ENCODE measurements at regions of chr7 and their contacts with region 1.

Region 1: GRCh38 chr7:106153891-106154449 is 41.9 kb upstream of the SYPL1 start:
- DNase-seq: peak; percentile 86
- H3K4me3 Mint-ChIP-seq: no peak overlapping the region
- H3K27ac Mint-ChIP-seq: no peak overlapping the region
- H3K4me1 Mint-ChIP-seq: no peaks in the 10 kb centered on the region
- H3K27me3 Mint-ChIP-seq: peaks cover 18% of the 10 kb centered on the region
- CTCF ChIP-seq: peak; percentile 92

Region 2: GRCh38 chr7:105759670-105760550 is 394.1 kb before region 1 on chr7:
- CTCF ChIA-PET with region 1: interaction called, 8 read pairs
- POLR2A ChIA-PET with region 1: no interaction called
- intact Hi-C with region 1: loop called (anchors 1 kb)
- DNase-seq: peak; percentile 61
- H3K4me3 Mint-ChIP-seq: no peak overlapping the region
- H3K27ac Mint-ChIP-seq: no peak overlapping the region
- H3K4me1 Mint-ChIP-seq: no peaks in the 10 kb centered on the region
- H3K27me3 Mint-ChIP-seq: no peaks in the 10 kb centered on the region
- CTCF ChIP-seq: peak; percentile 62

Region 3: DNA sequence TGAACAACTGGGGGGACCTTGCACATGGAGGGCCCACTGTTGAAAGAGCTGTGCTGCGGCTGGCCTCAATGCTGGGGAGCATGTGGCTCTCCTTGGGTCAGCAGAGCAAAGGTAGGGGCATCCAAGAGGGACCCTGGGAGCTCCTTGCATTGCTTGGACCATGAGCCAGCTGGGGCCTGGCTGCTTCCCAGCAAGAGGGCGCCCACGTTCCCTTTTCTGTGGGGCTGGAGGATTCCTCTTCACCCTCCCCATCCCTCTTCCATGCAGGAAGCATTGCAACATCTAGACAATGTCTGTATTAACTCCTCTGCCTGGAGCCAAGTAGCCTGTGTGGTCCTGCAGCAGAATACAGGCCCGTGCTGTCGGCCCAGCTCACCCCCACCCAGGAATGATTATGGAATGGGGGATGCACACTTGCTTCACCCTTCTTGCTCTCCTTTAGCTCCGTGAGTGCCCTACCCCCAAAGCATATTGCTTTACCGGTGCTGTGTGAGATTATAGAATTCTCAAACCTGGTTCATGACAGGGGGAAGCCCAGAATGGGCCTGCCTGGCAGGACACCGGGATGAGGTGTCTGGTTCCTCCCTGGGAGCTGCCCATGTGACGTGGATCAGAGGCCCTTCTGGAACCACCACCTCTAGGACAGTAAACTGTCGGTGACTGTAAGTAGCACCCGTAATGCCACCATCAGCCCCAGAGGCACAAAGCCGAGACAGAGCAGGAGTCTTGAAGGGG is 103.8 kb before region 1 on chr7:
- CTCF ChIA-PET with region 1: interaction called, 187 read pairs
- POLR2A ChIA-PET with region 1: interaction called, 45 read pairs
- intact Hi-C with region 1: no loop called
- DNase-seq: peak; percentile 85
- H3K4me3 Mint-ChIP-seq: no peak overlapping the region
- H3K27ac Mint-ChIP-seq: no peak overlapping the region
- H3K4me1 Mint-ChIP-seq: peaks cover 20% of the 10 kb centered on the region
- H3K27me3 Mint-ChIP-seq: peaks cover 15% of the 10 kb centered on the region
- CTCF ChIP-seq: no peak

Region 4: DNA sequence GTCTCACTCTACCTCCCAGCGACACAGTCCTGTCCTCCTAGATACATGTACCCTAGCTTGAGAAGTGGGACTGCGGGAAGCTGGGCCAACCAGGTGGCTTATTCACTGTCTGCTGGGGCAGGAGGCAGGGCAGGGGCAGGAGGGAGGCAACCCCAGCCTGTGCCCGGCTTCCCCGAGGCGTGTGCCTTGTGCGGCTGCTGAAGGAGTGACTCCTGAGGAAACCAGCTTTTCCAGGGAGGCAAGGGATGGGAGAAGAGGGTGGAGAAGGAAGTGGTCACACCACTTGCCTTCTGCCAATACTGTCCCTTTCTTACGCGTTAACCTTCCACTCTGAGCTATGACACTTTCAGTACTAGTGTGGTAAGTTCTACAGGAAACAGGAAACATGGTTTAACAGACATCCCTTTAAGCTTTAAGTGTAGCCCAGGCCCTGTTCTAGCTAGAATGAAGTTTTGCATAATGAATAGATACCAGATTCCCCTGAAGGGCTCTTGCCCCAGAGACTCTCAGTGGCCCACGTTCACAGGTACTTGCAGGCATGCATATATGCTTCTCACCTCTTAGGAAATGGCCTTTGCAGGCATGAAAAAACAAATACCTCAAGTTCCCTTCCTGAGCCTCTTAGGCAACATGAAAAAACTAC is 82.5 kb before region 1 on chr7:
- CTCF ChIA-PET with region 1: interaction called, 17 read pairs
- POLR2A ChIA-PET with region 1: interaction called, 29 read pairs
- intact Hi-C with region 1: no loop called
- DNase-seq: peak; percentile 81
- H3K4me3 Mint-ChIP-seq: no peak overlapping the region
- H3K27ac Mint-ChIP-seq: peak overlapping the region; percentile 49
- H3K4me1 Mint-ChIP-seq: peaks cover 49% of the 10 kb centered on the region
- H3K27me3 Mint-ChIP-seq: no peaks in the 10 kb centered on the region
- CTCF ChIP-seq: no peak

Region 5: DNA sequence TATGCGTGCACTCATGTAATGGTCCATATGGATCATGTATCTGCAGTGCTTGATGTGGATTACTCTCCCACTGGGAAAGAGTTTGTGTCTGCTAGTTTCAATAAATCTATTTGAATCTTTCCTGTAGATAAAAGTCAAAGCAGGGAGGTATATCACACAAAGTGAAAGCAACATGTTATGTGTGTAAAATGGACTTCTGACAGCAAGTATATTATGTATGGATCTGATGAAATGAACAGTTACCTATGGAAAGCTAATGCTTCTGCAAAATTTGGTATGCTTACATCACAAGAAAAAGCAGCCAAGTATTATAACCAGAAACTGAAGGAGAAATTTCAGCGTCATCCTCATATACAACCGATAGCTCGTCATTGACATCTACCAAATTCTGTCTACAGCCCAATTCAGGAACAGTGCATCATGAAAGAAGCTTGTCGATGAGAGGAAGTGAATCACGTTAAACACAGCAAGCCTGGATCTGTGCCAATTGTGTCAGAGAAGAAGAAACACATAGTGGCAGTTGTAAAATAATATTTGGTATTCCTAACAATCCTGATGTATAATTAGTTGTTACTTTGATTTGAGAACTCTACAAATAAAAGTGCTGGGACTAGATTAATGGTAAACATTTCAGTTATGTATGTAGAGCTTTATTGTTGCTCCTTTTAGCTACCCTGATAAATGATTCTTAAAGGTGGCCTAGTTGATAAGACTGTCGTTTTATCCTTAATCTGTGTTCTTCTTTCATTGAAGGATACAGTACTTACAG is 27.6 kb before region 1 on chr7:
- CTCF ChIA-PET with region 1: interaction called, 14 read pairs
- POLR2A ChIA-PET with region 1: interaction called, 5 read pairs
- intact Hi-C with region 1: no loop called
- DNase-seq: peak; percentile 86
- H3K4me3 Mint-ChIP-seq: no peak overlapping the region
- H3K27ac Mint-ChIP-seq: no peak overlapping the region
- H3K4me1 Mint-ChIP-seq: peaks cover 12% of the 10 kb centered on the region
- H3K27me3 Mint-ChIP-seq: no peaks in the 10 kb centered on the region
- CTCF ChIP-seq: no peak

Region 6: GRCh38 chr7:106166655-106167342 is 12.8 kb after region 1 on chr7:
- CTCF ChIA-PET with region 1: interaction called, 113 read pairs
- POLR2A ChIA-PET with region 1: interaction called, 4 read pairs
- intact Hi-C with region 1: no loop called
- DNase-seq: peak; percentile 83
- H3K4me3 Mint-ChIP-seq: no peak overlapping the region
- H3K27ac Mint-ChIP-seq: no peak overlapping the region
- H3K4me1 Mint-ChIP-seq: no peaks in the 10 kb centered on the region
- H3K27me3 Mint-ChIP-seq: no peaks in the 10 kb centered on the region
- CTCF ChIP-seq: peak; percentile 77

Measured in MCF 10A (cell line).